ENCODE measurements at regions of chr5 and their contacts with region 1.

Region 1: DNA sequence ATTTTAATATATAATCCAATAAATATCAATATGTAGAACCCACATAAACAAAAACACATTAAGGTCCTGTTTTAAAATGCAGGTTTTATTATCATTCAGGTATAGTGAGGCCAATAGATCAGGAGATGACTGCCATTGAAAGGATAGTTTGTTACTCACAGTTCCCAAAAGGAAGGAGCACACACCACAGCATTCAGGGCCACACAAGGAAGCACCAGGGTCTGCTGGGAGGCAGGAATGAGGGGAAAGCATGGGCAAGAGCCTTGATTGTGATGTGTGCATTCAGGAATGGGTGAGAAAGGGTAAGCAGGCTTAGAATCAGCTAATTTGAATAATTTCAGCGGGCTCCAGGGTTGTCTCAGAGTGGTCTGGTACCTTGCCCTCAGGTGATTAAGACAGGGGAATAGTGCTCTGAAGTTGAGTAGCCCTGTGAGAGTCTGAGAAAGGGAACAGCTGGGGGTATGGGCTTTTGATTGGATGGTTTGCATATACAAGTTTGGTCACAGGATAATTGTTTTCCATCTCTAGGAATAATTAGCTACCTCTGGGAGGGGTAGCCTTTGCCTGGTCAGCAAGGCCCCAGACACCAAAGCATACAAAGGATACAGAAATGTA is 19.8 kb upstream of the OTULIN start:
- DNase-seq: no peak
- H3K4me3 ChIP-seq: no peak overlapping the region
- CTCF ChIP-seq: no peak

Region 2: DNA sequence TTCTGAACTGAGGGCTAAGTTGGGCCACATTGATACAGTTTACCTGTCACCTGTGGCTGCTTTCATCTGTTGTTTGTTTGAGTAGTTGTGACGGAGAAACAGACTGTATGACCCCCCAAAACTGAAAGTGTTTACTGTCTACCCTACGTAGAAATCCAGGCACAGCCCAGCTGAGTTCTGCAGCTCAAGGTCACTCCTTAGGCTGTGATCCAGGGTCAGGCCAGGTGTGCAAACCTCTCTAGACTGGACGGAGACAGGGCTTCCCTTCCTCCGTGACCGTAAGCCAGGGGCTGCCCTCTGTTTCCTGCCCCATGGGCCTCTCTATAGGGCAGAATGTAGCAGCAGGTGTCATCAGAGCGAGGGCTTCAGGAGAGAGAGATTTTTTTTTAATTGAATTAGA is 271.0 kb before region 1 on chr5:
- CTCF ChIA-PET with region 1: interaction called, 16 read pairs
- POLR2A ChIA-PET with region 1: no interaction called
- DNase-seq: no peak
- H3K4me3 ChIP-seq: no peak overlapping the region
- CTCF ChIP-seq: no peak

Region 3: GRCh38 chr5:14399054-14399692 is 245.6 kb before region 1 on chr5:
- CTCF ChIA-PET with region 1: interaction called, 151 read pairs
- POLR2A ChIA-PET with region 1: no interaction called
- DNase-seq: no peak
- H3K4me3 ChIP-seq: no peak overlapping the region
- CTCF ChIP-seq: peak; percentile 30

Region 4: DNA sequence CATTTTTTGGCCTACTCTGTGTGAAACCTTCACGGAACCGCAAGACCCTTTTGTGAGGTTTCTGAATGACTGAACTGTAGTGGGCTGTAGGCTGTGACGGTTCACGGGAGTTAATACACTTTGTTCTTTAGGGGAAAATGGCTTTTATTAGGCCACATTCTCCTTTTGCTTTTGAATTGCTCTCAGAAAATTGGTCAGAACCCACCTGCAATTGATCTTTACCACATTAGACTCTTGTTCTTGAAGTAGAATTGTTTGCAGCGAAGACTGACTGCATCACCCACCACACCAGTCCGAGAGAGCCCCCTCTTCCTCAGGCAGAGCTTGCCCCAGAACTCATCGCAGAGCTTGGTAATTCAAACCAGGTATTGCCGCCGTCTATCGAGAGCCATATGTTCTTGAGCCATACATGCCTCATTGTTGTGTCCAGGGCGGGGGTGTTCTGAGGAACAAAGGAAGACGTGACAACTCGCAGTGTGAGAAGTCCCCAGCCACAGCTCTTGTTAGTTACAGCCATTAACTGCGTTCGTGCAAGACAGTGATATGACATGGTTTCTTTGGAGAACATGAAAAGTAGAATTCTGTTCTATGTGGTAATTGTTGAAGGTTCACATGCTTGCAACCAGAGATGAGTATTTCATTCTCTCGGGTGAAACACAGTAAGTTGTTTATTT is 229.6 kb before region 1 on chr5:
- CTCF ChIA-PET with region 1: interaction called, 35 read pairs
- POLR2A ChIA-PET with region 1: no interaction called
- DNase-seq: no peak
- H3K4me3 ChIP-seq: no peak overlapping the region
- CTCF ChIP-seq: no peak

Region 5: GRCh38 chr5:14505310-14506032 is 139.3 kb before region 1 on chr5:
- CTCF ChIA-PET with region 1: interaction called, 16 read pairs
- POLR2A ChIA-PET with region 1: no interaction called
- DNase-seq: no peak
- H3K4me3 ChIP-seq: no peak overlapping the region
- CTCF ChIP-seq: no peak

Region 6: GRCh38 chr5:14664302-14665100 is 19.8 kb after region 1 on chr5 and contains the start of gene OTULIN:
- CTCF ChIA-PET with region 1: interaction called, 63 read pairs
- POLR2A ChIA-PET with region 1: no interaction called
- DNase-seq: no peak
- H3K4me3 ChIP-seq: peak within 1 kb of the TSS; percentile 88
- CTCF ChIP-seq: no peak

Measured in AG04449 (cell line).